ENCODE measurements at regions of chr21 and their contacts with region 1.

Region 1: GRCh38 chr21:36966066-36966820 is at the start of gene HLCS:
- DNase-seq: peak; percentile 62 to 79 (median 72)
- ATAC-seq: peak; percentile 93
- H3K4me3 ChIP-seq: peak within 1 kb of the TSS; percentile 52
- H3K4me3 Mint-ChIP-seq: peak within 1 kb of the TSS; percentile 80 to 91 (median 85)
- H3K27ac ChIP-seq: peak within 1 kb of the TSS; percentile 75
- H3K27ac Mint-ChIP-seq: peak within 1 kb of the TSS; percentile 77 to 92 (median 91)
- H3K4me1 ChIP-seq: peaks cover 0 to 6% of the 10 kb centered on the region in 2 donors
- H3K4me1 Mint-ChIP-seq: peaks cover 8 to 25% (median 12%) of the 10 kb centered on the region in 7 donors
- H3K27me3 ChIP-seq: no peaks in the 10 kb centered on the region
- H3K27me3 Mint-ChIP-seq: no peaks in the 10 kb centered on the region
- total RNA-seq, gene HLCS: 8.8 to 19.3 (median 12.2) TPM

Region 2: GRCh38 chr21:36934864-36935420 is 31.3 kb before region 1 on chr21:
- CTCF ChIA-PET with region 1: no interaction called
- POLR2A ChIA-PET with region 1: interaction called, 3 read pairs
- intact Hi-C with region 1: loop called in 1 of 2 experiments (anchors 1 kb)
- DNase-seq: no peak
- ATAC-seq: no peak
- H3K4me3 ChIP-seq: no peak overlapping the region
- H3K4me3 Mint-ChIP-seq: no peak overlapping the region
- H3K27ac ChIP-seq: no peak overlapping the region
- H3K27ac Mint-ChIP-seq: no peak overlapping the region
- H3K4me1 ChIP-seq: no peaks in the 10 kb centered on the region
- H3K4me1 Mint-ChIP-seq: peaks cover 0 to 5% (median 0%) of the 10 kb centered on the region in 7 donors
- H3K27me3 ChIP-seq: no peaks in the 10 kb centered on the region
- H3K27me3 Mint-ChIP-seq: no peaks in the 10 kb centered on the region

Region 3: GRCh38 chr21:37072988-37073416 is 106.8 kb after region 1 on chr21 and contains the starts of genes PIGP and TTC3:
- CTCF ChIA-PET with region 1: no interaction called
- POLR2A ChIA-PET with region 1: interaction called, 11 read pairs
- intact Hi-C with region 1: loop called (anchors 1 to 2 kb)
- DNase-seq: peak; percentile 93 to 99 (median 97)
- ATAC-seq: peak; percentile 79
- H3K4me3 ChIP-seq: peak within 1 kb of the TSS; percentile 76
- H3K4me3 Mint-ChIP-seq: peak within 1 kb of the TSS; percentile 88 to 100 (median 98)
- H3K27ac ChIP-seq: peak within 1 kb of the TSS; percentile 97
- H3K27ac Mint-ChIP-seq: peak within 1 kb of the TSS; percentile 91 to 100 (median 97)
- H3K4me1 ChIP-seq: peaks cover 22 to 23% of the 10 kb centered on the region in 2 donors
- H3K4me1 Mint-ChIP-seq: peaks cover 30 to 66% (median 59%) of the 10 kb centered on the region in 7 donors
- H3K27me3 ChIP-seq: no peaks in the 10 kb centered on the region
- H3K27me3 Mint-ChIP-seq: peaks cover 0 to 6% (median 0%) of the 10 kb centered on the region in 5 donors
- total RNA-seq, gene PIGP: 9.1 to 26.7 (median 15.3) TPM
- total RNA-seq, gene TTC3: 66.6 to 208 (median 154) TPM